ENCODE measurements at regions of chr7 and their contacts with region 1.

Region 1: GRCh38 chr7:108146070-108146837 is 16.1 kb upstream of the LAMB4 start:
- DNase-seq: peak in 6 of 9 experiments; percentile 13 to 60 (median 46)
- ATAC-seq: no peak
- H3K4me3 ChIP-seq: no peak overlapping the region
- H3K4me3 Mint-ChIP-seq: no peak overlapping the region
- H3K27ac ChIP-seq: no peak overlapping the region
- H3K27ac Mint-ChIP-seq: no peak overlapping the region
- H3K4me1 ChIP-seq: no peaks in the 10 kb centered on the region
- H3K4me1 Mint-ChIP-seq: no peaks in the 10 kb centered on the region
- H3K27me3 ChIP-seq: no peaks in the 10 kb centered on the region
- H3K27me3 Mint-ChIP-seq: no peaks in the 10 kb centered on the region
- CTCF ChIP-seq: peak; percentile 64

Region 2: DNA sequence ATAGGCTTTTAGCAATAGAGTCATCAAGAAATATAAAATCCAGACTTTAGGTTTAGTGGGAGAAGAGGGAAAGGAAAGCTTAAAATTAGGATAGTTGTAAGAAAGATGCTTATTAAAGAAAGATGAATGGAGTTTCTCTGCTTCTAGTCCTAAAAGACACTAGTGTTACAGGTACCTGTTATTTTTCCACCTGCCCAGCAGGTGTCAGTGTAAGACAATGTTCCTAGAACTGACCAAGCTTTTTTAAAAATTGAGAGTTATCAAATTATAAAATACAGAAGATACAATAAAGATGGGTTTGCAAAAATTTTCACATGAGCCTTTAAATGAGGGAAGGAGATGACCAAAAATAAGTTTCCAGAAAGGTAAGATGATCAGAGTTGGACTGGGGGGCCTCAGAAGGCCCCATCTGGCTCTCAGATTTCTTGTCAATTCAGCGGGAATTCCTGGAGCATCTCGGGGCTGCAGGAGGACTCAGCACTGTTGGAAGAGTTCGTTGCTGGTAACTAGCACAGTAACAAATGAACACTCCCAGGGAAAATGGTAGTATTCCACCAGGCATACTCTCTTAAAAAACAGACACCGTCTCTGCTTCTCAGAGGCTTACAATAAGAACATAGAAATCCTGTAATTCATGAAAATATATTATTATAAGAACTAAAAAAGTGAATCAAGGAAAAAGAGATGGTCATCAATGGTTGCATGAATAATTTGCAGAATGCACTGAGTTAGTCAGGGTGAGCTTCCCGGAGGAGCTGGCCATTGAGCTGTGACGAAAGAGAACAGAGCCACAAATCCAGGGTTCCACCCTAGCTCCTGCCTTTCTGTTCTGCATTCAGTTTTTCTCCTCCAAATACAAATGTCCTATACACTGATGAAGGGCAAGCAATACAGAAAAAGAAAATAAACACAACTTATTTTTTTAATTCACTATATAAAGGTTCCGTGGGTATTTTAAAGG is 1353.0 kb before region 1 on chr7:
- CTCF ChIA-PET with region 1: no interaction called
- POLR2A ChIA-PET with region 1: no interaction called
- intact Hi-C with region 1: loop called in 1 of 2 experiments (anchors 10 kb)
- DNase-seq: peak in 6 of 9 experiments; percentile 16 to 75 (median 42)
- ATAC-seq: peak; percentile 82
- H3K4me3 ChIP-seq: no peak overlapping the region
- H3K4me3 Mint-ChIP-seq: no peak overlapping the region
- H3K27ac ChIP-seq: no peak overlapping the region
- H3K27ac Mint-ChIP-seq: no peak overlapping the region
- H3K4me1 ChIP-seq: no peaks in the 10 kb centered on the region
- H3K4me1 Mint-ChIP-seq: peaks cover 3% of the 10 kb centered on the region
- H3K27me3 ChIP-seq: no peaks in the 10 kb centered on the region
- H3K27me3 Mint-ChIP-seq: no peaks in the 10 kb centered on the region
- CTCF ChIP-seq: peak; percentile 88

Region 3: GRCh38 chr7:107462740-107463444 is 683.4 kb before region 1 on chr7:
- CTCF ChIA-PET with region 1: interaction called, 3 read pairs
- POLR2A ChIA-PET with region 1: no interaction called
- intact Hi-C with region 1: loop called in 1 of 2 experiments (anchors 5 kb)
- DNase-seq: peak in 8 of 9 experiments; percentile 3 to 72 (median 44)
- ATAC-seq: peak; percentile 65
- H3K4me3 ChIP-seq: no peak overlapping the region
- H3K4me3 Mint-ChIP-seq: no peak overlapping the region
- H3K27ac ChIP-seq: no peak overlapping the region
- H3K27ac Mint-ChIP-seq: no peak overlapping the region
- H3K4me1 ChIP-seq: no peaks in the 10 kb centered on the region
- H3K4me1 Mint-ChIP-seq: no peaks in the 10 kb centered on the region
- H3K27me3 ChIP-seq: no peaks in the 10 kb centered on the region
- H3K27me3 Mint-ChIP-seq: no peaks in the 10 kb centered on the region
- CTCF ChIP-seq: peak; percentile 69

Region 4: GRCh38 chr7:107917763-107918651 is 228.2 kb before region 1 on chr7:
- CTCF ChIA-PET with region 1: no interaction called
- POLR2A ChIA-PET with region 1: no interaction called
- intact Hi-C with region 1: loop called in 1 of 2 experiments (anchors 10 kb)
- DNase-seq: no peak
- ATAC-seq: no peak
- H3K4me3 ChIP-seq: no peak overlapping the region
- H3K4me3 Mint-ChIP-seq: no peak overlapping the region
- H3K27ac ChIP-seq: no peak overlapping the region
- H3K27ac Mint-ChIP-seq: no peak overlapping the region
- H3K4me1 ChIP-seq: peaks cover 7% of the 10 kb centered on the region
- H3K4me1 Mint-ChIP-seq: peaks cover 35% of the 10 kb centered on the region
- H3K27me3 ChIP-seq: no peaks in the 10 kb centered on the region
- H3K27me3 Mint-ChIP-seq: no peaks in the 10 kb centered on the region
- CTCF ChIP-seq: no peak

Region 5: DNA sequence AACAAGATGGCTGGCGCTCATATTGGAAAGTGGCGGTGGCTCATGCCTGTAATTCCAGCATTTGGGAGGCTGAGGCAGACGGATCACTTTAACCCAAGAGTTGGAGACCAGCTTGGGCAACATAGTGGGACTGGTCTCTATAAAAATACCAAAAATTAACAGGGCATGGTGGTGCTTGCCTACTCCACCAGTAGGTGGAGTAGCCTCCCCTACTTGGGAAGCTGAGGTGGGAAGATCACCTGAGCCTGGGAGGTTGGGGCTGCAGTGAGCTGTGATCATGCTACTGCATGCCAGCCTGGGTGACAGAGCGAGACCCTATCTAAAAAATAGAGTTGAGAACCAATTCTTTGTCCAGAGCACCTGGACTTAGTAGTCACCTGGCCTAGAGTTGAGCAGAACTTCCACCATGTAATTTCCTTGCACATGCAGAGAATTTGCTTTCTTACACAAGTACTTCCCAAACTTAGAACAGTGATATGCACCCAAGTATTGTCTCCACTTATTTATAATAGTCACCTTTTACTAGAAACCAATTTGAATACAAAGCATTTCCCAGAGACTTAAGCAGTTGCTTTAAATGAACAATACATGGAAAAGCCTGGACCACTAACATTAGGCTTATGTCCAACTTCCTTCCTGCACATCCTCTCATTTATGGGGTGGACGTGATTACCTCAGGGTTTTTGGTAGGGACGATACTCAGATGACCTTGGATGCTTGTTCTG is 32.0 kb before region 1 on chr7:
- CTCF ChIA-PET with region 1: interaction called, 14 read pairs
- POLR2A ChIA-PET with region 1: no interaction called
- intact Hi-C with region 1: loop called (anchors 1 to 2 kb)
- DNase-seq: peak in 2 of 9 experiments; percentile 17 to 38
- ATAC-seq: no peak
- H3K4me3 ChIP-seq: no peak overlapping the region
- H3K4me3 Mint-ChIP-seq: no peak overlapping the region
- H3K27ac ChIP-seq: no peak overlapping the region
- H3K27ac Mint-ChIP-seq: no peak overlapping the region
- H3K4me1 ChIP-seq: no peaks in the 10 kb centered on the region
- H3K4me1 Mint-ChIP-seq: no peaks in the 10 kb centered on the region
- H3K27me3 ChIP-seq: no peaks in the 10 kb centered on the region
- H3K27me3 Mint-ChIP-seq: no peaks in the 10 kb centered on the region
- CTCF ChIP-seq: peak; percentile 19

Region 6: GRCh38 chr7:108135446-108136190 is 10.6 kb before region 1 on chr7:
- CTCF ChIA-PET with region 1: interaction called, 17 read pairs
- POLR2A ChIA-PET with region 1: no interaction called
- intact Hi-C with region 1: no loop called
- DNase-seq: peak in 2 of 9 experiments; percentile 29 to 51
- ATAC-seq: peak; percentile 52
- H3K4me3 ChIP-seq: no peak overlapping the region
- H3K4me3 Mint-ChIP-seq: no peak overlapping the region
- H3K27ac ChIP-seq: peak overlapping the region in 1 of 2 experiments; percentile 2
- H3K27ac Mint-ChIP-seq: peak overlapping the region; percentile 73
- H3K4me1 ChIP-seq: peaks cover 14% of the 10 kb centered on the region
- H3K4me1 Mint-ChIP-seq: peaks cover 17% of the 10 kb centered on the region
- H3K27me3 ChIP-seq: no peaks in the 10 kb centered on the region
- H3K27me3 Mint-ChIP-seq: no peaks in the 10 kb centered on the region
- CTCF ChIP-seq: no peak